Activated B cell treated with CpG ODN at 0.5 μM for 24 hours (primary cell): ENCODE measurements at regions of chr6 and their contacts with region 1.

Region 1: DNA sequence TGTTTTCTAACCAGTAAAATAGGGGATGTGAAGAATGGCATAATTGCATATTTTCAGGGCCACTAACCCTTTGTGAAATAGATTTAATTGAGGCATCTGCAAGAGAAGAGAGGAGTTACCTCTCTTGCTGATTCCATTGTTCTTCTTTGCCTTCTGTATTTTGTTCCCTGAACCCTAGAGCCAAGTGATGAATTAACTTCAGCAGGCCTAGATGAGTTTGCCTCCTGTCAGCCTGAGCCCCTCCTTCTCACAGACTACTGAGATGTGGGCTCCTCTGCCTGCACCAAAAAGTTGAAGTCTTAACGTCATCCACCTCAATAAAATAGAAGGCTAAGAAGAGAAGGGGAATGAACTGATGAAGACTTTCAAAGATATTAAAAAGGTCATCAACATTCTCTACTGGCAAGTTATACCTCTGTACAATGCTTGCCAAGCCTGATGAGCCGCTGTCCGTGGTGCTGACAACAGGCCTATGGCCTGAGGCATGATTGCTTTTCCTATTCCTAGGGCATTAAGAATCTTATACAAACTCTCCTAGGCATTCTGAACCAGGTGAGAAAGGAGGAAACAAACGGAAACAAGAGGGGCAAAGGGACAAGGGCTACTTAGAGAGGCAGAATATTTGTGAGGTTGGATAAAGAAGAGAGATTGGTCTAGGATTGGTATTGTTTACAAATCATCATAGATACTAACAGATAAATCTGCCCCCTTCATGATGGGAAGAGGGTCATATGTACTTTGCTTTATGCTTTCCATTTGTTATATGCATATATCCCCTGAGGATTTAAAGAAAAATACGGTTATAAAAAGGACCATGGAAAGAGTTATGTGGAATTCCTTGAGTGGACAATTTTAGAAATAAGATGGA is 46.8 kb downstream of the CD24 start:
- DNase-seq: no peak
- ATAC-seq: no peak
- H3K4me3 Mint-ChIP-seq: no peak overlapping the region
- H3K27ac Mint-ChIP-seq: no peak overlapping the region
- H3K4me1 Mint-ChIP-seq: peaks cover 4% of the 10 kb centered on the region
- H3K27me3 Mint-ChIP-seq: peaks cover 24% of the 10 kb centered on the region
- CTCF ChIP-seq: no peak

Region 2: GRCh38 chr6:106866875-106867658 is 60.7 kb before region 1 on chr6:
- CTCF ChIA-PET with region 1: no interaction called
- POLR2A ChIA-PET with region 1: no interaction called
- intact Hi-C with region 1: loop called (anchors 5 kb)
- DNase-seq: no peak
- ATAC-seq: no peak
- H3K4me3 Mint-ChIP-seq: no peak overlapping the region
- H3K27ac Mint-ChIP-seq: no peak overlapping the region
- H3K4me1 Mint-ChIP-seq: no peaks in the 10 kb centered on the region
- H3K27me3 Mint-ChIP-seq: no peaks in the 10 kb centered on the region
- CTCF ChIP-seq: no peak

Region 3: GRCh38 chr6:106913676-106914280 is 14.0 kb before region 1 on chr6:
- CTCF ChIA-PET with region 1: no interaction called
- POLR2A ChIA-PET with region 1: no interaction called
- intact Hi-C with region 1: no loop called
- DNase-seq: no peak
- ATAC-seq: no peak
- H3K4me3 Mint-ChIP-seq: no peak overlapping the region
- H3K27ac Mint-ChIP-seq: no peak overlapping the region
- H3K4me1 Mint-ChIP-seq: no peaks in the 10 kb centered on the region
- H3K27me3 Mint-ChIP-seq: no peaks in the 10 kb centered on the region
- CTCF ChIP-seq: no peak

Region 4: GRCh38 chr6:106966229-106966628 is 38.5 kb after region 1 on chr6:
- CTCF ChIA-PET with region 1: no interaction called
- POLR2A ChIA-PET with region 1: no interaction called
- intact Hi-C with region 1: no loop called
- DNase-seq: no peak
- ATAC-seq: no peak
- H3K4me3 Mint-ChIP-seq: no peak overlapping the region
- H3K27ac Mint-ChIP-seq: no peak overlapping the region
- H3K4me1 Mint-ChIP-seq: peaks cover 7% of the 10 kb centered on the region
- H3K27me3 Mint-ChIP-seq: no peaks in the 10 kb centered on the region
- CTCF ChIP-seq: no peak